Mammary epithelial cell (primary cell): ENCODE measurements at regions of chr2 and their contacts with region 1.

Region 1: GRCh38 chr2:121095257-121096080 is 189.5 kb downstream of the TFCP2L1 start:
- DNase-seq: peak; percentile 67
- H3K4me3 ChIP-seq: no peak overlapping the region
- H3K27ac ChIP-seq: no peak overlapping the region
- H3K4me1 ChIP-seq: no peaks in the 10 kb centered on the region
- H3K27me3 ChIP-seq: no peaks in the 10 kb centered on the region
- CTCF ChIP-seq: peak; percentile 90 to 96

Region 2: DNA sequence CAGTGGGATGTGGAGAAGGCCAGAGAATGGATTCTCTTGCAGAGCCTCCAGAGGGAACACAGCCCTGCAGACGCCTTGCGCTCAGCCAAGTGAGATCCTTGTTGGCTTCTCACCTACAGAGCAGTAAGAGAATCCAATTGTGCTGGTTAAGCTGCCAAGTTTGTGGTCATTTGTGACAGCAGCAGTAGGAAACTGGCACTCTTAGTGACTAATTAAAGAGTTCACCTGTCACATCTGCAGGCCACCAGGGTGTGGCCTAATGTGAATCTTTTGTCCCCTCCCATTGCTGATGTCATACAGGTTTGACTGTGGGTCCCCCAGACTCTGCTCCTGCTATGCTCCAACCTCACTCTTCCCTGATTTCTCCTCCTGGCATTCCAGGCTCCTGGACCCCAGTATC is 46.3 kb before region 1 on chr2:
- CTCF ChIA-PET with region 1: no interaction called
- dilution Hi-C with region 1: no loop called
- in situ Hi-C with region 1: no loop called
- intact Hi-C with region 1: no loop called
- DNase-seq: no peak
- H3K4me3 ChIP-seq: no peak overlapping the region
- H3K27ac ChIP-seq: no peak overlapping the region
- H3K4me1 ChIP-seq: no peaks in the 10 kb centered on the region
- H3K27me3 ChIP-seq: no peaks in the 10 kb centered on the region
- CTCF ChIP-seq: no peak

Region 3: GRCh38 chr2:121185571-121186074 is 90.2 kb after region 1 on chr2:
- CTCF ChIA-PET with region 1: no interaction called
- dilution Hi-C with region 1: loop called (anchors 5 kb)
- in situ Hi-C with region 1: no loop called
- intact Hi-C with region 1: no loop called
- DNase-seq: peak; percentile 96
- H3K4me3 ChIP-seq: no peak overlapping the region
- H3K27ac ChIP-seq: peak overlapping the region; percentile 89
- H3K4me1 ChIP-seq: peaks cover 38% of the 10 kb centered on the region
- H3K27me3 ChIP-seq: no peaks in the 10 kb centered on the region
- CTCF ChIP-seq: no peak

Region 4: DNA sequence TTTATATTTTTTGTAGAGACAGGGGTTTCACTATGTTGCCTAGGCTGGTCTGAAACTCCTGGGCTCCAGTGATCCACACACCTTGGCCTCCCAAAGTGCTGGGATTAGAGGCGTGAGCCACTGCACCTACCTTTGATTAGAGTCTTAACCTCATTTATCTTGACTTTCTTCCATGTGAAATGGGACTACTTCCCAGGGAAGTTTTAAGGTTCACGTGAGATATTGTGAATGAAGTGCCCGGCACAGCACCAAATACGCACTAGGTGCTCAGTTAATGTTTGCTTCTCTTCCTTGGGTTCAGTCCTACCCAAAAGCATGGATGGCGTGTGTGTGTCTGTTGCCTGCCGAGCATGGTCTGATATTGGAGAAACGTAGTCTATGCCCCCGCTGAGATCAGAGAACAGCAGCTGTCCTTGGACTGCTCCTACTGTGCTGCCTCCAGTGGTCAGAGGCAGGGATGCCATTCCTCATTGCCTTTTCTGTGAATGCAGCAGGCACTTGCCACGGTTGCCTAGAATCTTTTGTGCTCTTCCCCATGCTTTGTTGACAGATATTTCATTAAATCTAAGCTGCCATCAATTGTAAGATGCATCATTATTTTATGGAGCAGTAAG is 201.9 kb after region 1 on chr2:
- CTCF ChIA-PET with region 1: no interaction called
- dilution Hi-C with region 1: loop called (anchors 25 kb)
- in situ Hi-C with region 1: no loop called
- intact Hi-C with region 1: loop called (anchors 2 kb)
- DNase-seq: no peak
- H3K4me3 ChIP-seq: no peak overlapping the region
- H3K27ac ChIP-seq: no peak overlapping the region
- H3K4me1 ChIP-seq: no peaks in the 10 kb centered on the region
- H3K27me3 ChIP-seq: no peaks in the 10 kb centered on the region
- CTCF ChIP-seq: peak; percentile 82 to 88

Region 5: DNA sequence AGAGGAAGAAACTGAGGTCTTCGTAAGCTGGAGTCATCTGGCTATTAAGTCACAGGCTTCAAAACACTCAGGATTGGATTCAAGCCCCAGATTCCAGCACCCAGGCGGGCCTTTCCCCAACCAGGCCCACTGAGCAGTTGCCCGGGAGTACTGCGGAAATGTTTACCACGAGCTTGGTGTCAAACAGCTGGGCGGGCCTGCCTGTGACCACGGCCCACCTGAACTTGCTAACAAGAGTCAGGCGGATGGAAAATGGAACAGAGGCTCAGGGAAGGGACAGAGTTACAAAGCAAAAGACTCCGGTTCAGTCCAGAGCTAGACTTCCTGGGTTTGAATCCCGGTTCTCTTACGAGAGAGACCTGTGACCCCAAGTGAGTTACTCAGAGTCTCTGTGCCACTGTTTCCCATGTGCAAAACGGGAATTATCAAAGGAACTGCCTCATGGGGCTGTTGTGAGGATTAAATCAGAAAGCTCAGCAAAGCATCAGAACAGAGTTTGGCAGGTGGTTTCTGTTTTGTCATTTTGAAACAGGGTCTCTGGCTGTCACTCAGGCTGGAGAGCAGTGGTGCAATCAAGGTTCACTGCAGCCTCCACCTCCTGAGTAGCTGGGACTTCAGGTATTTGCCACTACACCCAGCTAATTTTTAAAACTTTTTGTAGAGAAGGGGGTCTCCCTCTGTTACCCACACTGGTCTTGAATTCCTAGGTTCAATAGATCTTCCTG is 238.5 kb after region 1 on chr2:
- CTCF ChIA-PET with region 1: no interaction called
- dilution Hi-C with region 1: no loop called
- in situ Hi-C with region 1: loop called (anchors 10 kb)
- intact Hi-C with region 1: no loop called
- DNase-seq: no peak
- H3K4me3 ChIP-seq: no peak overlapping the region
- H3K27ac ChIP-seq: no peak overlapping the region
- H3K4me1 ChIP-seq: no peaks in the 10 kb centered on the region
- H3K27me3 ChIP-seq: no peaks in the 10 kb centered on the region
- CTCF ChIP-seq: no peak

Region 6: GRCh38 chr2:121748202-121748601 is 652.7 kb after region 1 on chr2:
- CTCF ChIA-PET with region 1: no interaction called
- dilution Hi-C with region 1: no loop called
- in situ Hi-C with region 1: no loop called
- intact Hi-C with region 1: loop called (anchors 10 kb)
- DNase-seq: peak; percentile 20
- H3K4me3 ChIP-seq: no peak overlapping the region
- H3K27ac ChIP-seq: no peak overlapping the region
- H3K4me1 ChIP-seq: no peaks in the 10 kb centered on the region
- H3K27me3 ChIP-seq: no peaks in the 10 kb centered on the region
- CTCF ChIP-seq: peak in 1 of 2 donors; percentile 23